MCF 10A (cell line): ENCODE measurements at regions of chr5 and their contacts with region 1.

Region 1: DNA sequence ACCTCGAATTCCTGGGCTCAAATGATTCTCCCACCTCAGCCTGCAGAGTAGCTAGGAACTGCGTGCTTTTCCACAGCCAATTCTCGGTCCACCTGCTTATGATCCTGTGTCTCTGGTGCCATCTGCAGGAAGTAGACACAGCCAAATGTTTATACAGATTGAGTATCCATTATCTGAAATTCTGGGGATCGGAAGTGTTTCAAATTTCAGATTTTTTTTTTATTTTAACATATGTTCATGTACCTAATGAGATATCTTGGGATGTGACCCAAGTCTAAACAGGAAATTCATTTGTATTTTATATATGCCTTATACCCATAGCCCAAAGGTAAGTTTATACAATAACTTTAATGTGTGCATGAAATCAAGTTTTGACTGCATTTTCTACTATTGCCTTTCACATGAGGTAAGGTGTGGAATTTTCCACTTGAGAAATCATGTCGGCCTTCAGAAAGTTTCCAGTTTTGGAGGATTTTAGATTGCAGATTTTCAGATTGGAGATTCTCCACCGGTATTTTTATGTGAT is 89.5 kb downstream of the ESM1 start:
- DNase-seq: peak; percentile 73
- H3K4me3 Mint-ChIP-seq: no peak overlapping the region
- H3K27ac Mint-ChIP-seq: peak overlapping the region; percentile 29
- H3K4me1 Mint-ChIP-seq: peaks cover 5% of the 10 kb centered on the region
- H3K27me3 Mint-ChIP-seq: peaks cover 40% of the 10 kb centered on the region
- CTCF ChIP-seq: peak; percentile 65

Region 2: GRCh38 chr5:54243473-54244080 is 652.3 kb before region 1 on chr5:
- CTCF ChIA-PET with region 1: no interaction called
- POLR2A ChIA-PET with region 1: no interaction called
- intact Hi-C with region 1: loop called (anchors 10 kb)
- DNase-seq: peak; percentile 57
- H3K4me3 Mint-ChIP-seq: no peak overlapping the region
- H3K27ac Mint-ChIP-seq: no peak overlapping the region
- H3K4me1 Mint-ChIP-seq: no peaks in the 10 kb centered on the region
- H3K27me3 Mint-ChIP-seq: no peaks in the 10 kb centered on the region
- CTCF ChIP-seq: peak; percentile 86

Region 3: DNA sequence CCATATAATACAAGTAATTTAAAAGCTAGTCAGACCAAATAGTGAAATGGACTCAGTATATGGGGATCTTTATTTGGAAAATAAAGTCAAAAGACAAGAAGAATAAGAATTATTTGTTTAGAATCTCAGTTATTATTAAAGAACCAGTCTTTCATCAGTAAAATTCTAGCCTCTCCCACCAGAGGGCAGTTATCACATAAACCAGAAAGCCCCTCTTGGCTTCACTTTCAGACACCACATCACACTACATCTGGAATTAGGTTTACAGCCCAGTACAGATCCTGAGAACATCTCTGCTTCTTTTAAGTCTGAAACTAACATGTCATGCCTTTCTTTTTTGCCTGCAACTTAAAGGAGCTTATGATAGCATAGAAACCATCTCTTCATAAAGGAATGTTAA is 452.6 kb before region 1 on chr5:
- CTCF ChIA-PET with region 1: interaction called, 3 read pairs
- POLR2A ChIA-PET with region 1: no interaction called
- intact Hi-C with region 1: loop called (anchors 5 kb)
- DNase-seq: peak; percentile 33
- H3K4me3 Mint-ChIP-seq: no peak overlapping the region
- H3K27ac Mint-ChIP-seq: no peak overlapping the region
- H3K4me1 Mint-ChIP-seq: no peaks in the 10 kb centered on the region
- H3K27me3 Mint-ChIP-seq: peaks cover 10% of the 10 kb centered on the region
- CTCF ChIP-seq: peak; percentile 43

Region 4: DNA sequence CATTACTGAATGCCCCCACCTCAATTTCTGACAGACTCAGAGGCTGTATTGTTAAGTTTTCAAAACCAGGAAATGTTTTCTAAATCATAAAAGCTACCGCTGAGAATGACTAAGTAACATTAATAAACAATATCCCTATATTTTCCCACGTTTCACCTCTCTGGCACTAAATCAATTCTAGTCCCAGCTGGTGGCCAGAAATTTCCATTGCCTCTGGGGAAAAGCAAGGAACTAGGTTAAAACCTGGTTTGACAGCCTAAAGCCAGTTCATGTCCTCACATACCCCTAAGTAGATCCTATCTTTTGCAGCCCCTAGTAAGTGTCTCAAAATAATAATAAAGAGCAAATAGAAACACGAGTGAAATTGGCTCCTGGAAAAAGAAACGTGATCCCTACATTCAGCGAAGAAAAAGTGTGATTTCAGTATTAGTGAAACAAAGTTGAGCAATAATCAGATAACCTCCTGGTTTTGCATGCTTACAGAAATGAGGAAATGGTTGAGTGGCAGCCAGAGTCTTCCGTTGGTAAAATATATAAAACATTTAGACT is 21.4 kb before region 1 on chr5:
- CTCF ChIA-PET with region 1: interaction called, 33 read pairs
- POLR2A ChIA-PET with region 1: interaction called, 6 read pairs
- intact Hi-C with region 1: no loop called
- DNase-seq: peak; percentile 80
- H3K4me3 Mint-ChIP-seq: peak overlapping the region; percentile 61
- H3K27ac Mint-ChIP-seq: peak overlapping the region; percentile 83
- H3K4me1 Mint-ChIP-seq: peaks cover 28% of the 10 kb centered on the region
- H3K27me3 Mint-ChIP-seq: no peaks in the 10 kb centered on the region
- CTCF ChIP-seq: no peak

Region 5: DNA sequence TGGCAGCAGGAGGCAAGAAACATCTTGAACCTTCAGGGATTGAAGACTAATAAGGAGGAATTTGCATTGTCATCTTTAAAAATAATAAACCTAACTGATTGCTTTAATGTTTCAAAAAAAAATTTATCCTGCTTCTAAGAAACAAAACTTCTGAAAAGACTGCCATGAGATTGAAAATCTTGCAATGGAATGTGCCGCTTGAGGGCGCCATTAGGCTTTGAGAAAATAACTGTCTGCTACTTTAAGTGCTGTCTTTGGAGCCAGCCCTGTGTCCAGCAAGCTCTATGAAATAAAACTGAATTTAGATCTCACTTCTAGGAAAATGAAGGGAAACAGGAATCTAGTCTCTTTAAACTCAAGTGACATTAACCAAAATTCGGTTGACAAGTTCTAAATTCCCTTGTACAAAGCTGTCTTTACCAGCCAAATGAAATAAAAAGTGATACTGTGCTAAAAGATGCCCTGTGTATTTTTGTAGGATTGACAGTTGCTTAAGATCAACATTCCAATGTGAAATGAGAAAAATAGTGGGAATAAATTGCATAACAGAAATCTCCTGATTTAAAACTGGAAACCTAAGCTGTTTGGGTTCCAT is 10.2 kb after region 1 on chr5:
- CTCF ChIA-PET with region 1: interaction called, 18 read pairs
- POLR2A ChIA-PET with region 1: interaction called, 3 read pairs
- intact Hi-C with region 1: no loop called
- DNase-seq: peak; percentile 69
- H3K4me3 Mint-ChIP-seq: no peak overlapping the region
- H3K27ac Mint-ChIP-seq: no peak overlapping the region
- H3K4me1 Mint-ChIP-seq: no peaks in the 10 kb centered on the region
- H3K27me3 Mint-ChIP-seq: peaks cover 32% of the 10 kb centered on the region
- CTCF ChIP-seq: peak; percentile 61